Right ventricle myocardium superior (tissue), 1 donor: ENCODE measurements at regions of chr16 and their contacts with region 1.

Region 1: GRCh38 chr16:50210266-50211038 is 55.9 kb upstream of the ADCY7 start:
- DNase-seq: peak; percentile 85
- ATAC-seq: peak; percentile 94

Region 2: GRCh38 chr16:50024684-50025536 is 185.5 kb before region 1 on chr16 and contains the start of gene CNEP1R1:
- intact Hi-C with region 1: loop called (anchors 5 kb)
- DNase-seq: peak; percentile 95
- ATAC-seq: peak; percentile 100
- total RNA-seq, gene CNEP1R1: 16.1 TPM

Region 3: GRCh38 chr16:50152807-50153452 is 57.5 kb before region 1 on chr16 and contains the start of gene TENT4B:
- intact Hi-C with region 1: loop called (anchors 2 kb)
- DNase-seq: peak; percentile 92
- ATAC-seq: peak; percentile 96
- total RNA-seq, gene TENT4B: 7.7 TPM

Region 4: DNA sequence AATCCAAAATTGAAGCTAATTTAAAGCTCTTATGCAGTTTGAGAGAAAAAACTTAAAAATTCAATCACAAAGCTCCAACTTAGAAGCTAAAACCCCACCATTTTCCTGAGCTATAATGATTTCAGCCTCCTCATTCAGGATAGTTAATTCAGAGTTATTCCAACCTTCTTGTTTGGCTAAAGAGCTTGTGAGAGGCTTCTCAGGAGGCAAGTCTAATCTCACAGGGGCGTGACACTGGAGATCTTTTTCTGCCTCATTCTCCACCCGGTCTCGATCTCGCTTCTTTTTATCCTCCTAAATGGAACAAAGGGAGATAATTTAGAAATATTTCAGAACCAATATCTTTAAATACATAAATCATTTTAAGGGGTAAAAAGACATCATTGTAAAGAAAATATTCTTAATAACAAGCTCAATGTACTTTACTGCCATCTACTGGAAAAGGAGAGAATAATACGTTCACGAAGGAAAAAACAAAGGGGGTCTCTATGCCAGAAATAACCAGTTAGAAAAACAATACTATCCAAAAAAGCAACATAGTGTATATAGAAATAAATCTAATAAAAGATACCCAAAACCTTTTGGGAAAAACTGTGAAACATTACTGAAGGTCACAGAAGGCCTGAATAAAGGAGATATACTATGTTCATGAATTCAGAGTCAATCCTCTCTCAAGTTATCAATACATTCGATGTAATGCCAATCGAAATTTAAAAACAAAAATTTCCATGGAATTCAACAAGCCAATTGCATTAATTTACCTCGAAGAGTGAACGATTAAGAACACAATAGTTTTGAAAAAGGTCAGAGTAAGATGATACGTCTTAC is 144.4 kb after region 1 on chr16:
- intact Hi-C with region 1: loop called (anchors 10 kb)
- DNase-seq: no peak
- ATAC-seq: no peak

Region 5: DNA sequence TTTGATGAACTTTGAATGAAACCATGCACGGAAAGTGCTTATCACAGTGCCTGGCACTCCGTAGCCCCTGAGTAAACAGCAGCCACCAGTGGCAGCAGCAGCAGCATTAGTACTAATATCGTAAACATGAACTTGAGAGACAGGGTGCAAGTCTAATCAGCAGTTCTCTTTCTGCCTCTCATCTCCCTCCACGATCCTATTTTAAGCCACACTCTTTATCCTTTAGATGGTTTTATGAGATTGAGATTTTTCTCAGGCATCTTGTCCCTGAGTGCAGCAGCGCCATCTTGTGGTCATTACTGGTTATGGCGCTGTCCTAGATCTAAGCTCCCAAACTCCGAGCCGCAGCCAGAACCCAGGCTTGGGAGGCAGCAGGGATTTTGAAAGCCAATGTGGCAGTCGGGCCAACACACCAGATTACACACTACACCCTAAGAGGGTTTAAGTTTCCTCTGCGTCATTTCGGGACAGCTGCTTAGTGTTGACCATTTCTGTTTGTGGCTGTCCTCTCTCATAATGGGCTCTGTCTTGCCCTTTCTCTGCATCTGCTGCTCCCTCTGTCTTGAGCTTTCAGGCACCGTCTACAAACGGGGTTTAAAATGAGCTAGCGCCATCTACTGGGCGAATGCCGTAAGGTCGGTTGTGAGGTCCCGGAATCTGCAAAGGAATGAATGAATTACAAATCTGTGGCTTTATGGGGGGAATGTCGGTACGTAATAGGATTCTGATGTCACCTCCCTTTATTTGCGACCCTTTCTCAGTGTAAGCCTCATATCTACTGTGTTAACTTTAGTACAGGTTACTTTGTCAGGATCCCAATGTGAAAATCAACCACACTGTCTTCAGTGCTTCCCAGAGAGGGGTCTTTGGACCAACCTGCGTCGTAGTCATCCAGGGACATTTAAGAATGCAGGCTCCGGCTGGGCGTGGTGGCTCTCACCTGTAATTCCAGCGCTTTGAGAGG is 595.9 kb after region 1 on chr16:
- intact Hi-C with region 1: loop called (anchors 10 kb)
- DNase-seq: peak; percentile 87
- ATAC-seq: peak; percentile 95